ENCODE measurements at regions of chr10 and their contacts with region 1.

Region 1: GRCh38 chr10:111100198-111100597 is 23.4 kb downstream of the ADRA2A start:
- DNase-seq: no peak

Region 2: GRCh38 chr10:111137012-111137411 is 36.8 kb after region 1 on chr10:
- intact Hi-C with region 1: loop called in 1 of 2 experiments (anchors 2 kb)
- DNase-seq: no peak